ENCODE measurements at regions of chr17 and their contacts with region 1.

Region 1: DNA sequence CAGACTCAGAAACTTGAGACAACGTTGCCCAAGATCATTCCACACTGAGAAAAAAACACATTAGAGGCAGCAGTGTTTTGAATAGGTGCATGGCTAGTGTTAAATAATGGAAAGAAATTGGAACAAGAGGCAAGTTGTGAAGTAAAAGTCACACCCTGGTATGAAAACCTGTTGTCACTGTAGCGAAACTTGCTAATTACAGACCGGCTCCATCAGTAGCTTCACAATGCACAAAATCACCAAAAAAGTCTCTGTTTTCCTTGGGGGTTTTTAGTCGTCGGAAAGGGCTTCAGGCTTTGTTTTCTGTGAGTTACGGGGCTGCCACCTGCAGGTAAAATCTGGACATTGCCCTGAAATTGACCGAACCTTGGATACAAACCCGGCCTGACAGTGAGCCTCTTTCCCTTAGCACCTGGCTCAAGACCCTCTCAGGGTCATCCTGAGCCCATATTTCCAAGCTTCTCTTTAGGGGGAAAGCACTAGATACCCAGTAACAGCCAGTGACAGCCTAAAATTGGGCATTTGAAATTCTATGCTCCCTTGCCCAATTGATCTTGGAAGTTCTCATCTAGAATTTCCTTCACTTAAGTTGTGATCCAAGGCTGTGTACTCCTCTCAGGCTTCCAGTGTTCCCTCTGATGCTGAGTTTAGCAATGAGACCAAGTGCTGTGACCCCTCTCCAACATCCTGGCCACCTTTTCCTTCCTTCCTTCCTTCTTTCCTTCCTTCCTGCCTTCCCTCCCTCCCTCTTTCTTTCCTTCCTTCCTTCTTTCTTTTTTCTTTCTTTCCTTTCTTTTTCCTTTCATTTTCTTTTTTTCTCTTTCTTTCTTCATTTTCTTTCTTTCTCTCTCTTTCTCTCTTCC is 7.2 kb upstream of the GRB2 start:
- DNase-seq: peak; percentile 79
- ATAC-seq: peak; percentile 78
- H3K4me3 ChIP-seq: peak overlapping the region in 1 of 3 experiments; percentile 35; a peak in 1 of 6 replicates
- H3K27ac ChIP-seq: no peak overlapping the region
- H3K4me1 ChIP-seq: peaks cover 33% of the 10 kb centered on the region
- H3K27me3 ChIP-seq: peaks cover 0 to 5% of the 10 kb centered on the region in 2 experiments; a peak in 1 of 5 replicates
- CTCF ChIP-seq: peak; percentile 98
- EP300 ChIP-seq: no peak
- POLR2A ChIP-seq: no peak
- RAD21 ChIP-seq: peak; percentile 96

Region 2: DNA sequence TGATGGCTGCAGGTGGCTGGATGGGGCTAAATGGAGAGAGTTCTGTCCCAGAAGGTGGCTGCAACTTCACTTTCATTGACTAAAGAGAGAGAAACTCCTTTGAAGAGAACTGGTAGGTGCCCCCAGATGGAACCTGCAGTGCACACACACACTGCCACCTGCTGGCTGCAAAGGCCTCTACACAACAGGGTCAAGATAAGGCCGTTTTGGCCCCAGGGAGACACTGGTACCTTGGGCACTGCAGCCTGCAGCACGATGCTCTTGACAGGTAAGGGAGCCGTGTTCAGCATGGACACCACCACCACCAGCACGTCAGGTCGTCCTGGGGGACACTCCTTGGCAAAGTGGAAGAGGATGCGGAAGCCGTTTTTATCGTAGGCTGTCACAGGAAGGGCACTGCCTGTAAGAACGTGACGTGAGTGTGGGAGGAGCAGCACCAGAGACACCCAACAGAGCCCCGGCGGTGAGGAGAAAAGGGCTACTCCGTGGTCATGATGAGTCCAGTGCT is 173.9 kb before region 1 on chr17:
- CTCF ChIA-PET with region 1: interaction called, 13 read pairs
- POLR2A ChIA-PET with region 1: no interaction called
- in situ Hi-C with region 1: no loop called
- intact Hi-C with region 1: loop called (anchors 1 kb)
- DNase-seq: peak; percentile 74
- ATAC-seq: peak; percentile 83
- H3K4me3 ChIP-seq: no peak overlapping the region
- H3K27ac ChIP-seq: no peak overlapping the region
- H3K4me1 ChIP-seq: no peaks in the 10 kb centered on the region
- H3K27me3 ChIP-seq: no peaks in the 10 kb centered on the region
- CTCF ChIP-seq: peak; percentile 97
- EP300 ChIP-seq: no peak
- POLR2A ChIP-seq: no peak; a peak in 2 of 4 replicates
- RAD21 ChIP-seq: peak; percentile 54

Region 3: GRCh38 chr17:75271233-75271954 is 141.3 kb before region 1 on chr17:
- CTCF ChIA-PET with region 1: interaction called, 10 read pairs
- POLR2A ChIA-PET with region 1: interaction called, 7 read pairs
- in situ Hi-C with region 1: loop called (anchors 5 kb)
- intact Hi-C with region 1: loop called (anchors 2 kb)
- DNase-seq: peak; percentile 58
- ATAC-seq: peak; percentile 36
- H3K4me3 ChIP-seq: peak overlapping the region; percentile 91 to 98 (median 94)
- H3K27ac ChIP-seq: peak overlapping the region; percentile 77
- H3K4me1 ChIP-seq: peaks cover 43% of the 10 kb centered on the region
- H3K27me3 ChIP-seq: no peaks in the 10 kb centered on the region
- CTCF ChIP-seq: peak; percentile 70
- EP300 ChIP-seq: no peak
- POLR2A ChIP-seq: peak in 1 of 2 experiments; percentile 71; a peak in 2 of 4 replicates
- RAD21 ChIP-seq: peak; percentile 87

Region 4: GRCh38 chr17:75319904-75320691 is 92.6 kb before region 1 on chr17:
- CTCF ChIA-PET with region 1: interaction called, 38 read pairs
- POLR2A ChIA-PET with region 1: no interaction called
- in situ Hi-C with region 1: loop called (anchors 5 kb)
- intact Hi-C with region 1: loop called (anchors 1 kb)
- DNase-seq: no peak
- ATAC-seq: no peak
- H3K4me3 ChIP-seq: no peak overlapping the region
- H3K27ac ChIP-seq: no peak overlapping the region
- H3K4me1 ChIP-seq: no peaks in the 10 kb centered on the region
- H3K27me3 ChIP-seq: no peaks in the 10 kb centered on the region
- CTCF ChIP-seq: no peak
- EP300 ChIP-seq: no peak
- POLR2A ChIP-seq: no peak
- RAD21 ChIP-seq: no peak

Region 5: DNA sequence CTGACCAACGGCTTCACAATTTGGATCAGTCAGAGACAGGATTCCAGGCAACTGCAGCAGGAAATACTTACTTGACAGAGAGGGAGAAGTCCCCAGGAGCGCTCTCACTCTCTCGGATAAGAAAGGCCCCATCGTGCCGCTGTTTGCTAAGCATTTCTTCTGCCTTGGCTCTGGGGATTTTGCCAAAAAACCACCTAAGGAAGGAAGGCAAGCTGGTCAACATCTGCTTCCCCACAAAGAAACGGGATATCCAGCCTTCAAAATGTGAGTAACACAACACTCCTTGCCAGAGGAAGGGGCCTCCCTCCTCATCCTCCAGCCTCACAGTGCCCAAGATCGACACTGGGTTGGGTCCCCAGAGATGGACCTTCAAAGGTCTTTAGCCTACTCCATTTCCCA is 86.9 kb before region 1 on chr17:
- CTCF ChIA-PET with region 1: interaction called, 38 read pairs
- POLR2A ChIA-PET with region 1: no interaction called
- in situ Hi-C with region 1: no loop called
- intact Hi-C with region 1: loop called (anchors 1 kb)
- DNase-seq: no peak
- ATAC-seq: no peak
- H3K4me3 ChIP-seq: no peak overlapping the region
- H3K27ac ChIP-seq: peak overlapping the region; percentile 71
- H3K4me1 ChIP-seq: peaks cover 13% of the 10 kb centered on the region
- H3K27me3 ChIP-seq: no peaks in the 10 kb centered on the region
- CTCF ChIP-seq: no peak
- EP300 ChIP-seq: no peak
- POLR2A ChIP-seq: no peak
- RAD21 ChIP-seq: no peak

Region 6: GRCh38 chr17:75712446-75712845 is 299.8 kb after region 1 on chr17:
- CTCF ChIA-PET with region 1: no interaction called
- POLR2A ChIA-PET with region 1: no interaction called
- in situ Hi-C with region 1: no loop called
- intact Hi-C with region 1: no loop called
- DNase-seq: no peak
- ATAC-seq: no peak
- H3K4me3 ChIP-seq: no peak overlapping the region
- H3K27ac ChIP-seq: no peak overlapping the region
- H3K4me1 ChIP-seq: no peaks in the 10 kb centered on the region
- H3K27me3 ChIP-seq: peaks cover 0 to 8% of the 10 kb centered on the region in 2 experiments; a peak in 1 of 5 replicates
- CTCF ChIP-seq: no peak
- EP300 ChIP-seq: no peak
- POLR2A ChIP-seq: no peak
- RAD21 ChIP-seq: no peak